Adrenal gland (tissue), 19 donors: ENCODE measurements at regions of chr3 and their contacts with region 1.

Region 1: GRCh38 chr3:99499235-99500158 is 138.9 kb upstream of the COL8A1 start:
- DNase-seq: peak; percentile 24 to 73 (median 39)
- H3K4me3 ChIP-seq: no peak overlapping the region
- H3K27ac ChIP-seq: no peak overlapping the region
- H3K4me1 ChIP-seq: peaks cover 0 to 20% of the 10 kb centered on the region in 2 donors
- H3K27me3 ChIP-seq: no peaks in the 10 kb centered on the region
- CTCF ChIP-seq: peak; percentile 44 to 63 (median 54)
- POLR2A ChIP-seq: no peak

Region 2: GRCh38 chr3:99645277-99646106 is 146.0 kb after region 1 on chr3:
- intact Hi-C with region 1: no loop called
- DNase-seq: no peak
- H3K4me3 ChIP-seq: no peak overlapping the region
- H3K27ac ChIP-seq: peak overlapping the region in 2 of 5 donors; percentile 17 to 38
- H3K4me1 ChIP-seq: no peaks in the 10 kb centered on the region
- H3K27me3 ChIP-seq: no peaks in the 10 kb centered on the region
- CTCF ChIP-seq: peak; percentile 21 to 59 (median 42)
- POLR2A ChIP-seq: no peak

Region 3: DNA sequence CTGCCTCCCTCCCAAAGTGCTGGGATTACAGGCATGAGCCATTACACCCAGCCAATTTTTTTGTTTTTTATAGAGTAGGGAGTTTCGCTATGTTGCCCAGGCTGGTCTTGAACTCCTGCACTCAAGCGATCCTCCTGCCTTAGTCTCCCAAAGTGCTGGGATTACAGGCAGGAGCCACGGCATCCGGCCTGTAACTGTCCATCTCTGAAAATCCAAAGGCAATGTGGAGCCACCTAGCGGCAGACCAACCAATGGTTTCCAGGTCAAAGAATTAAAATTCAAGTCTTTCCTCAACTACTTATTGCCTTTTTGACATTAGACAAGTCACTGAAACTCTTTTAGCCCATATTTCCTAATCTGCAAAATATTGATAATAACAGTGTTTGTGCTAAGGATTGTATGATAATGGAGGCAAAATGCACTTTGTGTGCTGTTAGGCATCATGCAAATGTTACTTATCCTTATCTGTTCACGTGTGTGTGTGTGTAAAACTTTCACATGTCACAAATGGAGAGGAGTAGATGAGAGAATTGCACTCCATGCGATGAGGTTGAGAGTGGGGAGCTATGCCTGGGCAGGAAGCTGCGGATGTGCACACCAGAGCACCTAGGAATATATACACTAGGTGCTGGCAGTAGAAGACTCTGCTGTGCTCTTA is 187.6 kb after region 1 on chr3:
- intact Hi-C with region 1: loop called in 1 of 2 experiments (anchors 10 kb)
- DNase-seq: peak; percentile 49 to 81 (median 65)
- H3K4me3 ChIP-seq: no peak overlapping the region
- H3K27ac ChIP-seq: no peak overlapping the region
- H3K4me1 ChIP-seq: no peaks in the 10 kb centered on the region
- H3K27me3 ChIP-seq: peaks cover 4% of the 10 kb centered on the region
- CTCF ChIP-seq: peak; percentile 63 to 81 (median 68)
- POLR2A ChIP-seq: no peak

Region 4: GRCh38 chr3:99765042-99765942 is 265.8 kb after region 1 on chr3:
- intact Hi-C with region 1: no loop called
- DNase-seq: no peak
- H3K4me3 ChIP-seq: no peak overlapping the region
- H3K27ac ChIP-seq: no peak overlapping the region
- H3K4me1 ChIP-seq: no peaks in the 10 kb centered on the region
- H3K27me3 ChIP-seq: no peaks in the 10 kb centered on the region
- CTCF ChIP-seq: no peak
- POLR2A ChIP-seq: no peak